OCI-LY7 (cell line): ENCODE measurements at regions of chr6 and their contacts with region 1.

Region 1: DNA sequence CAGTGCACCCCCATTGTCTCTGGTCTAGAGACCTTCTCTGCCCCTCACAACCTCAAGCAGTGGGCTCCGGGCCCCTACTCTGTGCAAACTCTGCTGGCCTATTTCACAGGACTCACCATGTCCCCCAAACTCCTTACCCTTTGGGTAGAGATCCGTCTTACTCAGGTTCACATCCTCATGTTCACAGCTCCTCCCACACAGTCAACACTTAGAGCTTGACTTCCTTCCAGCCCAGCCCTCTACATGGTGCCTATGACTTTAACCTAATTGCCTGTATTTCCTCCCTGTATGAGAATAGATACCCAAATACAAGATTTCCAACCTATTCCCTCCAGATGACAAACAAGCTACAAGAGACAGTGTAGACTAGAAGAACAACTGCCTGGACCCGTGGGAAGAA is 528.6 kb upstream of the JARID2 start:
- DNase-seq: no peak
- H3K4me3 ChIP-seq: no peak overlapping the region
- H3K27ac ChIP-seq: no peak overlapping the region
- H3K4me1 ChIP-seq: peaks cover 17% of the 10 kb centered on the region
- CTCF ChIP-seq: no peak

Region 2: DNA sequence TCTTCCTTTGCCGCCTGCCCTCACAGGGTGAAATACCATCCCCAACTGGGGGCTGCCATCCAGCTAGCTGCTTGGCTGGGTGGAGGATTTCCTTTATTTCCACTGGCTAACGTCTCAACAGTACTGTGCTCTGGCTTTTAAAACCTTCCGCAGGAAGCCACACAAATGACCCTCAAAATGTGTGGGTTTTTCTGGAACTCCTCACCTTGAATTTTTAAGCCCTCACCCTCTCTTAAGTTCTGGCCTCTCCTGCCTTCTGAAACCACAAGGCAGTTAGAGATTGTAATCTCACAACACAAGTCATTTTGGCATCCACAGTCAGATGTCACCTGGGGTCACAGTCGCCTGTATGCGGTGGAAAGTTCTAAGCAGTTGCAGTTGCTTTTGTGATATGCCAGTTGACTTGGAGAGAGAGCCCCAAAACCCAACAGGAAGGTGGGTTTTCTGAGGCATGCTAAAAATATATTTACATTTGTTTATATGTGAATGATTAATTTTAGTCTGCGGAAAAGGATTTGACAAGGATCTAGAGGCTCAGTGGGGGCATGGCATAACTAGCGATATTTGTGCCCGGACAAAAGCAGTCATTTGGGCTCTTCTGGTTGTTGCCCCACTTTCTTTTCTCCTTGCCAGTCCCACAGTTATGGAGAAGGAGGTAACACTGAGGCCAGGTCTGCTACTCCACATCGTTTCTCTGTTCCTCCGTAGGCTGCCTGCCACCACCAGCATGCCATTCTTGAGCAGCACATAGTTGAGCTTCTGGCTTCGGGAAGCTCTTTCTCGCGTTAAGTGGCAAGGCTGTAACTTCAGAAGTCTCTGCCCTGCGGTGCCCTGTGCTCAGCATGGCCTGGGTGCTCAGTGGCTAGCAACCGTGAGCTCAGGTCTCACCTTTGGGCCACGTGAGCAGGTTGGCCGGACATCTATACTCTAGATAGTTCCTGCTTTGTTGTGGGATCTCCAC is 264.5 kb before region 1 on chr6:
- CTCF ChIA-PET with region 1: no interaction called
- POLR2A ChIA-PET with region 1: no interaction called
- intact Hi-C with region 1: no loop called
- DNase-seq: no peak
- H3K4me3 ChIP-seq: no peak overlapping the region
- H3K27ac ChIP-seq: no peak overlapping the region
- H3K4me1 ChIP-seq: peaks cover 4% of the 10 kb centered on the region
- CTCF ChIP-seq: no peak

Region 3: GRCh38 chr6:14728396-14729024 is 11.2 kb after region 1 on chr6:
- CTCF ChIA-PET with region 1: interaction called, 11 read pairs
- POLR2A ChIA-PET with region 1: interaction called, 9 read pairs
- intact Hi-C with region 1: no loop called
- DNase-seq: peak; percentile 44
- H3K4me3 ChIP-seq: peak overlapping the region; percentile 59
- H3K27ac ChIP-seq: peak overlapping the region; percentile 98
- H3K4me1 ChIP-seq: peaks cover 57% of the 10 kb centered on the region
- CTCF ChIP-seq: no peak